KBM-7 (cell line): ENCODE measurements at regions of chr7 and their contacts with region 1.

Region 1: GRCh38 chr7:155796381-155797261 is 15.6 kb downstream of the SHH start:
- DNase-seq: peak; percentile 66

Region 2: DNA sequence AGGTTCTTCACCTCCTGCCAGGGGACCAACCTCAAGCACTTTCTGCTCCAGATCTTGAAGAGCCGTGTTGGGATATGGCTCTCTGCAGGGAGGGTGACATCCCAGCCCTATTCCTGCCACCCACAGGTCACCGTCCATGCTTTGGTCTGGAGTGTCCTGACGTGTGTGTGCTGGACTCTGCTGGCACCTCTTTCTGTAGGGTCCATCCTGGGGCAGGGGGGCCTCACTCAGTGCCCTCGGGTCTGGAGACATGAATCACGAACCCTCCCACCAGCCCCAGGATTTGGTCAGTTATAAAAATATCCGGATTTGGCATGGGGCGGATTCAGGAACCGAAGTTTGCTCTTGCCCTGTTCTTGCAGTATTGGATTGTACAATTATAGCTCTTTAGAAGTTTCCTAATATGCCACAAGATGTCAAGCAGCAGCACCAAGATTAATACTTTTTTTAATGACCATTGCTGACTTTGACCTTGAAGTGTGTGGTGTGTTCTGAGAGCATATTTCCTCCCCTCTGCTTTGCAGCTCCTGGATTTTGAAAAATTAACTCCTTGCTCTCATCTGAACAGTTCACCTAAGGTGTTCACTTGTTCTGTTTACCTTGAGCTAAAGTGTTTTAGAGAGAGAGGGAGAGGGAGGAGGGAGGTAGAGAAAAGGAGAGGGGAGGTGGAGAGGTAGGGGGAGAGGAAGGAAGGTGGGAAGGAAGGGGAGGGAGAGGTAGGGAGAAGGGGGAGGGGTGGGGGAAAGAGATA is 111.0 kb after region 1 on chr7:
- in situ Hi-C with region 1: no loop called
- DNase-seq: no peak

Region 3: GRCh38 chr7:156816943-156817572 is 1020.4 kb after region 1 on chr7:
- in situ Hi-C with region 1: loop called (anchors 25 kb)
- DNase-seq: peak; percentile 39

Region 4: DNA sequence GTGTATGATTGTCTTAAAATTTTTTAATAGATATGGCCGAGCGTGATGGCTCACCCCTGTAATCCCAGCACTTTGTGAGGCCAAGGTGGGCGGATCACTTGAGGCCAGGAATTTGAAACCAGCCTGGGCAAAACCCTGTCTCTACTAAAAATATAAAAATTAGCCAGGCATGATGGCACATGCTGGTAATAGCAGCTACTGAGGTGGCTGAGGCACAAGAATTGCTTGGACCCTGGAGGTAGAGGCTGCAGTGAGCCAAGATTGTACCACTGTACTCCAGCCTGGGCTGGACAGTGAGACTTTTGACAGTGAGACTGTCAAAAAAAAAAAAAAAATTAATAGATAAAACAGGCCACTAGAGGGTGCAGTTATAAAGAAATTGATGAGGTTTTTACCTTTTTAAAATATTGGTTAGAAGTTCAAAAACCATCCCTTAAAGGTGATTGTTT is 1173.4 kb after region 1 on chr7:
- in situ Hi-C with region 1: no loop called
- DNase-seq: peak; percentile 57